Activated CD4-positive, alpha-beta T cell treated with anti-CD3 and anti-CD28 coated beads for 36 hours (primary cell): ENCODE measurements at regions of chr1 and their contacts with region 1.

Region 1: GRCh38 chr1:222465211-222466041 is 82.5 kb downstream of the HHIPL2 start:
- DNase-seq: peak; percentile 88
- ATAC-seq: peak; percentile 93
- H3K4me3 Mint-ChIP-seq: peak overlapping the region; percentile 63
- H3K27ac Mint-ChIP-seq: peak overlapping the region; percentile 85
- H3K4me1 Mint-ChIP-seq: peaks cover 11% of the 10 kb centered on the region
- H3K27me3 Mint-ChIP-seq: no peaks in the 10 kb centered on the region

Region 2: DNA sequence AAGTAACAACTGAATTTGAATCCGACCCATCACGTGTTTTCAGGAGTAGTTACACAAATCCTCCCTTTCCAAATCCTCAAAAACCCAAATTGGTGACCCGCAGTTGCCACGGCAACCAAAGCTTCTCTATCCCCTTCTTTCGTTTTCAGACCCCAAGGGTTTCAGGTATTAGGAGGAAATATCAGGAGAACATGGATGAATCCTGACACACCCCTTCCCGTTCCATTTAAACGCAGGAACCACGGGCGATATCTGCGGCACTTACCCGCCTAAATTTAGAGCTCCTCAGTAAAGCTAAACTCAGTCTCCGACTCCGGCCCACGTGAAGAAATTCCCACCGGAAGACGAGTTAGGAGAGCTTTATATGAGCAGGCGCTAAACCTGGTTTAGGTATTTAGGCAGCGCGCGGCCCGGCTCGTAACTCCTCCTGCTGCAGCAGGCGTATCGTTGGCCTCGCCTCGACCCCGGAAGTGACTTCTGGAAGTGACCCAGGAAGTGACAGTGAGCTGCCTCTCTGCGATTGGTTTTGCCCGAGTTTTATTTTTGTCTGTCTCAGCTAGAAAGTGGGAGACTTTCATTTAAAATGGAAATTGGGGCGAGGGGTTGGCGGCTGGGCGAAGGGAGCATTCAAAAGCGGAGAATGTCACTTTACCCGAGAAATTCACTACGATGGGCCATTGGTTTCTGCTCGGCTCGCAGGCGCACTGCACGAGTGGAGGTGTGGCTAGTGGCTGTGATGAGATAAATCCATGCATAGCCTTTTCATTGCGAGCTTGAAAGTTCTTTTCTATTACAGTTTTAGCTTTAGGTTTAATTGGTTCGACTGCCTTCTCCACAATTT is 124.3 kb after region 1 on chr1 and contains the start of gene TAF1A:
- CTCF ChIA-PET with region 1: interaction called, 3 read pairs
- POLR2A ChIA-PET with region 1: no interaction called
- intact Hi-C with region 1: loop called in 1 of 2 experiments (anchors 1 kb)
- DNase-seq: peak; percentile 93
- ATAC-seq: peak; percentile 99
- H3K4me3 Mint-ChIP-seq: peak within 1 kb of the TSS; percentile 99
- H3K27ac Mint-ChIP-seq: peak within 1 kb of the TSS; percentile 99
- H3K4me1 Mint-ChIP-seq: peaks cover 36% of the 10 kb centered on the region
- H3K27me3 Mint-ChIP-seq: no peaks in the 10 kb centered on the region
- total RNA-seq, gene TAF1A: 18.5 to 21.1 TPM

Region 3: DNA sequence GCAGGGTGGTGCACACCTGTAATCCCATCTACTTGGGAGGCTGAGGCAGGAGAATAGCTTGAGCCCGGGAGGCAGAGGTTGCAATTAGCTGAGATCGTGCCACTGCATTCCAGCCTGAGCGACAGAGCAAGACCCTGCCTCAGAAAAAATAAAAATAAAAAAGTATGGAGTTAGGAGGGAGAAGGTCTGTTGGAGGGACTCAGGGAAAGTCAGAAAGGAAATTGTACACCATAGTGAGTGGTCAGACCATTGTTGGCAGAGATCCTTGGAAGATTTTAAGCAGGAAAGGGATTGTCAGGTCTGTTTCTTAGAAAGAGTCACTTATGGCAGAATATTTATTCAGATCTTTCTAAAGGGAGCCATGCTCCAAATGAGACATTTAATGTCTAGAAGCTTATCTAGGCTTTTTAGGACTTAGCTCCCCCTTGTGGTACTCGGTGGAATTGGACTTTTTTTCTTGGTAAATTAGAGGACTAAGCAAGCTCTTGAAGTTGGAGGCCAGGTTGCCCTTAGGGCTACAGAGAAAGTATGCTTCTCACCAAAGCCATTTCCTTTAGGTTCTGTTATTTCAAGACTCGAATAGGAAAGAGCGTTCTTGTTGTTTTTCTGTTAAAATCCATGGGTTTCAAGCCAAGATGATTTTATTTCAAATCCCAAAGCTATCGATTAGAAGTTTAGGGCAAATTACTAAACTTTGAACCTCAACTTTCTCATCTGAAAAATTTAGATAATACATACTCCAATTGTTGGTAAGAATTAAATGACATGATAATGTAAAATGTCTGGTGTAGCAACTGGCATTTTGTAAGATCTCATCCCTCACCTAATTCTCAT is 169.0 kb after region 1 on chr1:
- CTCF ChIA-PET with region 1: interaction called, 56 read pairs
- POLR2A ChIA-PET with region 1: no interaction called
- intact Hi-C with region 1: loop called (anchors 1 kb)
- DNase-seq: peak; percentile 76
- ATAC-seq: peak; percentile 86
- H3K4me3 Mint-ChIP-seq: no peak overlapping the region
- H3K27ac Mint-ChIP-seq: no peak overlapping the region
- H3K4me1 Mint-ChIP-seq: peaks cover 2% of the 10 kb centered on the region
- H3K27me3 Mint-ChIP-seq: no peaks in the 10 kb centered on the region

Region 4: GRCh38 chr1:222713091-222713961 is 247.9 kb after region 1 on chr1:
- CTCF ChIA-PET with region 1: no interaction called
- POLR2A ChIA-PET with region 1: no interaction called
- intact Hi-C with region 1: loop called (anchors 1 kb)
- DNase-seq: peak; percentile 92
- ATAC-seq: peak; percentile 68
- H3K4me3 Mint-ChIP-seq: peak overlapping the region; percentile 98
- H3K27ac Mint-ChIP-seq: peak overlapping the region; percentile 100
- H3K4me1 Mint-ChIP-seq: peaks cover 37% of the 10 kb centered on the region
- H3K27me3 Mint-ChIP-seq: no peaks in the 10 kb centered on the region

Region 5: DNA sequence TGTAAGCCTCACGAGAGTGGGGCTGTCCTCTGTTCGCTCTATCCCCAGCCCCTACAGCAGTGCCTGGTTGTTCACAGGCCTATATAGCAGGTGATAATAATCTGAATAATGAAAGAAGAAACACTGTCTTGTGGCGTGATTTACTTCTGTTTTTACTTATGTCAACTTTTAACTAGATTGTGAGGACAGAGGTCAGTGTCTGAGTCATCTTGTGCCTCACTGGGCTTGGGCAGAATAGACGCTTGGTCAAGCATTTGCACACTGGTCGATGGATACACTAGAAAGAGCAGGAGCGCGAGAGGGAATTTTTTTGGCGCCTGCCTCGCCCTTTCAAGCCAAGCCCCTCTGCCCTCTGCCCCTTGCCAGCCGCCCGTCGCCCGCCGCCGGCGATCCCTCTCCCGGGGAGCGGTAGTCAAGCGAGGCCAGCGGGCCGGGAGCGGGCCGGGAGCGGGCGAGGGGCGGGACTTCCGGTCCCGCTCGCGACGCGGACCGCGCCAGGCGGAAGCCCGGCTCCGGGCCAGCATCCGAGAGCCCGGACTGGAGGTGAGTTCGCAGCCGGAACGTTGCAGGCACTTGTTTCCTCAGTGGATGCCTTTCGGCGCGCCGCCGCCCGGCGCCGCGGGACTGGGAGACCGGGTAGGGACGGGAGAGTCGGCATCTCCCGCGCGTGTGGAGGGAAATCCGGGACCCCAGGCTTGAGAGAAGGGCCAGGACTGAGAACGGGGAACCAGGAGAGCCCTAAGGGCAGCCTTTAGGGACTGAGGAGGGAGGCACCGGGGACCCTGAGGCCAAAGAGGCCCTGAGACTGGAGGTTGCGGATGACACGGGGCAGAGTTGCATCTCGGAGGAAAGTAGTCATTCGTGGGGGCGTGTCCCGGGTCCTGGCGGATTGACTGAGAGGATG is 349.4 kb after region 1 on chr1 and contains the start of gene DISP1:
- CTCF ChIA-PET with region 1: no interaction called
- POLR2A ChIA-PET with region 1: no interaction called
- intact Hi-C with region 1: loop called in 1 of 2 experiments (anchors 2 kb)
- DNase-seq: peak; percentile 88
- ATAC-seq: peak; percentile 88
- H3K4me3 Mint-ChIP-seq: peak within 1 kb of the TSS; percentile 90
- H3K27ac Mint-ChIP-seq: peak within 1 kb of the TSS; percentile 91
- H3K4me1 Mint-ChIP-seq: peaks cover 25% of the 10 kb centered on the region
- H3K27me3 Mint-ChIP-seq: no peaks in the 10 kb centered on the region
- total RNA-seq, gene DISP1: 0.98 to 1.9 TPM

Region 6: GRCh38 chr1:223081181-223081994 is 616.0 kb after region 1 on chr1:
- CTCF ChIA-PET with region 1: no interaction called
- POLR2A ChIA-PET with region 1: no interaction called
- intact Hi-C with region 1: loop called (anchors 1 to 10 kb)
- DNase-seq: peak; percentile 89
- ATAC-seq: peak; percentile 99
- H3K4me3 Mint-ChIP-seq: peak overlapping the region; percentile 30
- H3K27ac Mint-ChIP-seq: no peak overlapping the region
- H3K4me1 Mint-ChIP-seq: no peaks in the 10 kb centered on the region
- H3K27me3 Mint-ChIP-seq: no peaks in the 10 kb centered on the region